ENCODE measurements at regions of chr17 and their contacts with region 1.

Region 1: GRCh38 chr17:46782250-46782953 is 36.1 kb downstream of the WNT3 start:
- DNase-seq: peak; percentile 62
- ATAC-seq: peak; percentile 90
- H3K4me3 ChIP-seq: peak overlapping the region in 1 of 3 experiments; percentile 35; a peak in 1 of 6 replicates
- H3K27ac ChIP-seq: no peak overlapping the region
- H3K4me1 ChIP-seq: peaks cover 50% of the 10 kb centered on the region
- H3K27me3 ChIP-seq: peaks cover 1 to 40% of the 10 kb centered on the region in 2 experiments; a peak in 3 of 5 replicates
- CTCF ChIP-seq: peak; percentile 96
- EP300 ChIP-seq: no peak
- POLR2A ChIP-seq: no peak
- RAD21 ChIP-seq: peak; percentile 95

Region 2: GRCh38 chr17:46733837-46734475 is 48.4 kb before region 1 on chr17:
- CTCF ChIA-PET with region 1: no interaction called
- POLR2A ChIA-PET with region 1: no interaction called
- in situ Hi-C with region 1: loop called (anchors 10 kb)
- intact Hi-C with region 1: no loop called
- DNase-seq: no peak
- ATAC-seq: no peak
- H3K4me3 ChIP-seq: no peak overlapping the region
- H3K27ac ChIP-seq: no peak overlapping the region
- H3K4me1 ChIP-seq: no peaks in the 10 kb centered on the region
- H3K27me3 ChIP-seq: no peaks in the 10 kb centered on the region
- CTCF ChIP-seq: no peak
- EP300 ChIP-seq: no peak
- POLR2A ChIP-seq: no peak
- RAD21 ChIP-seq: no peak

Region 3: GRCh38 chr17:46822388-46822921 is 40.1 kb after region 1 on chr17:
- CTCF ChIA-PET with region 1: no interaction called
- POLR2A ChIA-PET with region 1: no interaction called
- in situ Hi-C with region 1: loop called (anchors 5 kb)
- intact Hi-C with region 1: no loop called
- DNase-seq: no peak
- ATAC-seq: peak; percentile 7; the same call in 2 of the 3 replicates
- H3K4me3 ChIP-seq: no peak overlapping the region
- H3K27ac ChIP-seq: no peak overlapping the region
- H3K4me1 ChIP-seq: peaks cover 35% of the 10 kb centered on the region
- H3K27me3 ChIP-seq: peaks cover 14 to 51% of the 10 kb centered on the region in 2 experiments
- CTCF ChIP-seq: peak; percentile 89
- EP300 ChIP-seq: no peak
- POLR2A ChIP-seq: no peak
- RAD21 ChIP-seq: peak; percentile 62

Measured in HepG2 (cell line).